ENCODE measurements at regions of chr6 and their contacts with region 1.

Region 1: GRCh38 chr6:15254070-15254841 is 8.4 kb downstream of the JARID2 start:
- DNase-seq: no peak
- CTCF ChIP-seq: no peak

Region 2: GRCh38 chr6:15131651-15132061 is 122.6 kb before region 1 on chr6:
- in situ Hi-C with region 1: no loop called
- DNase-seq: no peak
- CTCF ChIP-seq: no peak

Region 3: GRCh38 chr6:15327271-15327670 is 73.0 kb after region 1 on chr6:
- in situ Hi-C with region 1: loop called (anchors 10 kb)
- DNase-seq: peak; percentile 49
- CTCF ChIP-seq: peak; percentile 23